Lower lobe of right lung (tissue), 2 donors: ENCODE measurements at regions of chr16 and their contacts with region 1.

Region 1: DNA sequence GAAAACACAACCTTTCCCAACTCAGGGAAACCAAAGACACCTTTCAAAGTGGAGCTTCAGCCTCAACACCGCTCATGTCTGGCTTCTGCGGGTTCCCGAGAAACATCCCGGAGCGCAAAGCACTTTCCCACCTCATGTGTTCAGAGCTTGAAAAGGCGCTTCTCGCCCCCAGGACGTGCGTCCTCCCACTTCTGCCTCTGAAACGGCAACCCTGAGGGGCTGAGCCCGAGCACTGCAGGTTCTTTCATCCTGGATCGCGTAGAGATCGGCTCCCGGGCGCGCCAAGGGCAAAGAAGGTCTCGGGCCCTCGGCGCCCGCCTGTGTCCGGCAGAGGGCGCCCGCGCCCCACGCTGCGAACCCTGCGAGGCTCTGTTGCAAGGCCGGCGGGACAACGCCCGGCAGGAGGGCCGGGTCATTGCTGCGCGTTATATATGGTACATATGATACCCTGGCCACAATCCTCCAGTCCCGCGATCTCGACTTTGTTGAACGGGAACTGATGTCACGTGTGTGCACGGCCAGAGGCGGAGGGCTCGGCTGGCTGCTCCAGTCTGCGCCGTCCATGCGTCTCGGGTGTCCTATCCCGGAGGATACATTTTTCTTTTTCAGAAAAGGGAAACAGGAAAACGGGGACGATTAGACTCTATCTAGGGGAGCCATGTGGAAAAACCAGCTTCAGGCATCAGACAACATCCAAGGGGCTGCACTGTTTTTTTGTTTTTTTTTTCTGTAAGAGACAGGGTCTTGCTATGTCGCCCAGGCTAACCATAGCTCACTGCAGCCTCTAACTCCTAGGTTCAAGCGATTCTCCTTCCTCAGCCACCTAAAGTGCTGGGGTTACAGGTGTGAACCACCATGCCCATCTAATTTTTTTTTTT is 19.1 kb downstream of the COQ7 start:
- DNase-seq: peak; percentile 94
- ATAC-seq: peak; percentile 99
- H3K4me3 ChIP-seq: peak overlapping the region; percentile 53
- H3K27ac ChIP-seq: peak overlapping the region; percentile 56
- H3K4me1 ChIP-seq: peaks cover 14% of the 10 kb centered on the region
- H3K27me3 ChIP-seq: no peaks in the 10 kb centered on the region
- CTCF ChIP-seq: peak; percentile 100

Region 2: DNA sequence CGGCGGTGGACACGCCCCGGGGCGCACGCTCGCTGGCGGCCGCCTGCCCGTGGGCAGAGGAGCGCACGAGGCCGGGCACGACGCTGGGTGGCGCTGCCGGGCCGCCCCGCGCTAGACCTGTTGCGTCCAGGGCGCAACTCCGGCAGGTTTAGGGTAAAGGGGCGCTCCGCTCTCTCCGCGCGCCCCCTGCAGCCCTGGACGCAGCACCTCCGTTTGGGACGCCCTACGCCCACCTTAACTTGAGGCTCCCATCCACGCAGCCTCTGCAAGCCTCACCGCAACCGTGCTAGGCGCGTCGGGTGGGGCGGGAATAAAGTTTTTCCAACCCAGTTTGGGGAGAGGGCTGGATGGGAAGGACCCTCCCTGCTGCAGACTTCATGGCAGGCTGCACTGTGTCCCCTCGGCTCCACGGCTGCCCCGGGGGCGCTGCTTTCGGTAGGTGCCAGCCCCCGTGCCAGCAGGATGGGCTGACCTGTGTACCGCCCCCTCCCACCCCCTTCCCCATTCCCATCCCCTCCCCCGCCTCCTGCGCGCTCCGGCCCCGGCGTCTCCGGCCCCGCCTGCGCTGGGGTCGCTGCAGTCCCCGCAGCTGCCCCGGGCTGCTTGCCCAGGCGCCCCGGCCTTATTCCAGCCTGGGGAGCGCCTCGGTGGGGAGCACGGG is 81.3 kb after region 1 on chr16 and contains the start of gene SYT17:
- intact Hi-C with region 1: loop called (anchors 10 kb)
- DNase-seq: peak; percentile 87
- ATAC-seq: peak; percentile 94 to 96
- H3K4me3 ChIP-seq: peak within 1 kb of the TSS; percentile 77
- H3K27ac ChIP-seq: peak within 1 kb of the TSS; percentile 76
- H3K4me1 ChIP-seq: peaks cover 22% of the 10 kb centered on the region
- H3K27me3 ChIP-seq: peaks cover 11% of the 10 kb centered on the region
- CTCF ChIP-seq: peak; percentile 91
- total RNA-seq, gene SYT17: 11.8 TPM

Region 3: DNA sequence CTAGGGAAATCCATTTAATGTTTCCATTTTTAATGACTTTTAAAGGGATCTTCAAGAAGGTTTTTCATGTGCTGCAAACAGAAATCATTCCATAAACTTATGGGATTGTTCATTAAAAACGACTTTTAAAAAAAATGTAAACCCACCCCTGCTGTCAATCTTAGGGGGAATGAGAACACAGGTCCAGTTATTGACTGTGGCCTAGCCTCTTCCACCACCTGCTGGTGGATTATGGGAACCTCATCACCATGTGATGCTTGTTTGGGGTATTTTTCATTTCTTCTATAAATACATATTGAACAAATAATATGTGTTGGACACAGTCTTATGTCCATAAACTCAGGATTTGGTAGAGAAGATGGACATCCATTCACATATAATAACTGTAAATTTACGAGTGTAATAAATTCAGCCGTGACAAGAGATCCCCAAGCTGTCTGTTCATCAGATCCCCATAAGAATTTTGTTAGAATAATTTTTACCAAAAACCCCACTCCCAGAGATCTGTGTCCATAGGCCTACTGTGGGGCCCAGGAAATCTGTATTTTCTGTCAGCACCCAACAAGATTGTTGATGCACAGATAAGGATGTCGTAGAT is 289.1 kb after region 1 on chr16:
- intact Hi-C with region 1: loop called (anchors 10 kb)
- DNase-seq: no peak
- ATAC-seq: peak; percentile 64 to 73
- H3K4me3 ChIP-seq: no peak overlapping the region
- H3K27ac ChIP-seq: no peak overlapping the region
- H3K4me1 ChIP-seq: peaks cover 14% of the 10 kb centered on the region
- H3K27me3 ChIP-seq: no peaks in the 10 kb centered on the region
- CTCF ChIP-seq: peak; percentile 81